B cell (primary cell): ENCODE measurements at regions of chr10 and their contacts with region 1.

Region 1: GRCh38 chr10:77004917-77005564 is 632.6 kb downstream of the KCNMA1 start:
- DNase-seq: peak; percentile 21
- ATAC-seq: no peak
- H3K4me3 ChIP-seq: no peak overlapping the region
- H3K4me3 Mint-ChIP-seq: no peak overlapping the region
- H3K27ac ChIP-seq: no peak overlapping the region
- H3K27ac Mint-ChIP-seq: no peak overlapping the region
- H3K4me1 ChIP-seq: peaks cover 2 to 18% of the 10 kb centered on the region in 2 donors
- H3K4me1 Mint-ChIP-seq: peaks cover 16% of the 10 kb centered on the region
- H3K27me3 ChIP-seq: no peaks in the 10 kb centered on the region
- H3K27me3 Mint-ChIP-seq: no peaks in the 10 kb centered on the region
- CTCF ChIP-seq: peak; percentile 75

Region 2: DNA sequence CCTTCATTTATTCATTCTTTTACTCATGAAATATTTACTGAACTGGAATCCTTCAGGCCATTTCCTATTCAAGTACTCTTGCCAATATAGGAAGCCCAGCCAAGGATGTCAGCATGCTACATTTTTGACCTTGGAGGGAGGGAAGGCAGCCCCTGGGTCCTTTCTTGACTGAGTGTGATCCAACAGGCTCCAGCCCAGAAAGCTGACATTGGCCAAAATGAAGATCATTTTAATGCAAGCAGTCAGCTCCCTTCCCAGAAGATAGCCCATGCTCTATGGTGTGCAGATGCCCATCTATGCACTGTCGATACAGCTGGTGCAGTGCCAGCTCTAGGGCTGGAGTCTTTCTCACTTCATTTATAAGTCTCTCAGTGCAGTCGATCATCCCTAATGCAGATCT is 13.4 kb before region 1 on chr10:
- CTCF ChIA-PET with region 1: interaction called, 15 read pairs
- POLR2A ChIA-PET with region 1: no interaction called
- intact Hi-C with region 1: no loop called
- DNase-seq: no peak
- ATAC-seq: no peak
- H3K4me3 ChIP-seq: no peak overlapping the region
- H3K4me3 Mint-ChIP-seq: no peak overlapping the region
- H3K27ac ChIP-seq: no peak overlapping the region
- H3K27ac Mint-ChIP-seq: no peak overlapping the region
- H3K4me1 ChIP-seq: no peaks in the 10 kb centered on the region
- H3K4me1 Mint-ChIP-seq: no peaks in the 10 kb centered on the region
- H3K27me3 ChIP-seq: no peaks in the 10 kb centered on the region
- H3K27me3 Mint-ChIP-seq: no peaks in the 10 kb centered on the region
- CTCF ChIP-seq: no peak

Region 3: GRCh38 chr10:77212632-77213031 is 207.6 kb after region 1 on chr10:
- CTCF ChIA-PET with region 1: no interaction called
- POLR2A ChIA-PET with region 1: no interaction called
- intact Hi-C with region 1: no loop called
- DNase-seq: no peak
- ATAC-seq: no peak
- H3K4me3 ChIP-seq: no peak overlapping the region
- H3K4me3 Mint-ChIP-seq: no peak overlapping the region
- H3K27ac ChIP-seq: no peak overlapping the region
- H3K27ac Mint-ChIP-seq: no peak overlapping the region
- H3K4me1 ChIP-seq: no peaks in the 10 kb centered on the region
- H3K4me1 Mint-ChIP-seq: peaks cover 3% of the 10 kb centered on the region
- H3K27me3 ChIP-seq: peaks cover 0 to 2% (median under 1%) of the 10 kb centered on the region in 4 experiments
- H3K27me3 Mint-ChIP-seq: peaks cover 4% of the 10 kb centered on the region
- CTCF ChIP-seq: no peak